ENCODE measurements at regions of chr3 and their contacts with region 1.

Region 1: DNA sequence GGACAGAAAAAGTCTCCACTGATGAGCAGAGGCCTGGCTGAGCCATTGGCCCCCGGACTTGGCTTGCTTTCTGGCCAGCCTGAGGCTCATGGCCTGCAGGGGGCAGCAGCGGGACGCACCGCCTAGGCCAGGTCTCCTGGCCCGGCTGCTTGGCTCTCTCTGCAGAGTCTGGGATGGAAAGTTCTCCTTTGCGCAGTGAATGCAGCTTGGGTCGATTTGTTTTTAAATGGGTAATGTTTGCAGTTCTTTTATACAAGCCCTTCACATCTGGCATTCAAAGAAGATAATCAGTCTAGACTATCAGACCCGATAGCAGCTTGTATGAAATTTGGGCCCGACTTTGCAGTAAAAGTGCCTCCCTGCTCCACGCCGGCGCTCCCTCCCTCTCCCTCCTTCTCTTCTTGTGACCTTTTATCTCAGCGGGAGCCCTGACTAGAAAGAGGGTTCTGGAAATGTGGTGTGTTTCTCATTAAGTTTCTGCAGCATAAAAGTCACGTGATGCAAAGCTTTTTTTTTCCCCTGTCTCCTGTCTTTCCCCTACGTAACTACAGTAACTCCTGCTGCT is 59.9 kb downstream of the ZNF621 start:
- DNase-seq: peak; percentile 78
- ATAC-seq: peak; percentile 86
- H3K4me3 Mint-ChIP-seq: no peak overlapping the region
- H3K27ac Mint-ChIP-seq: no peak overlapping the region
- H3K4me1 Mint-ChIP-seq: peaks cover 5% of the 10 kb centered on the region
- H3K27me3 Mint-ChIP-seq: peaks cover 15% of the 10 kb centered on the region
- CTCF ChIP-seq: peak; percentile 91

Region 2: GRCh38 chr3:39434574-39434973 is 1150.1 kb before region 1 on chr3:
- CTCF ChIA-PET with region 1: no interaction called
- POLR2A ChIA-PET with region 1: no interaction called
- intact Hi-C with region 1: no loop called
- DNase-seq: no peak
- ATAC-seq: peak; percentile 99
- H3K4me3 Mint-ChIP-seq: no peak overlapping the region
- H3K27ac Mint-ChIP-seq: no peak overlapping the region
- H3K4me1 Mint-ChIP-seq: peaks cover 4% of the 10 kb centered on the region
- H3K27me3 Mint-ChIP-seq: peaks cover 9% of the 10 kb centered on the region
- CTCF ChIP-seq: no peak

Region 3: DNA sequence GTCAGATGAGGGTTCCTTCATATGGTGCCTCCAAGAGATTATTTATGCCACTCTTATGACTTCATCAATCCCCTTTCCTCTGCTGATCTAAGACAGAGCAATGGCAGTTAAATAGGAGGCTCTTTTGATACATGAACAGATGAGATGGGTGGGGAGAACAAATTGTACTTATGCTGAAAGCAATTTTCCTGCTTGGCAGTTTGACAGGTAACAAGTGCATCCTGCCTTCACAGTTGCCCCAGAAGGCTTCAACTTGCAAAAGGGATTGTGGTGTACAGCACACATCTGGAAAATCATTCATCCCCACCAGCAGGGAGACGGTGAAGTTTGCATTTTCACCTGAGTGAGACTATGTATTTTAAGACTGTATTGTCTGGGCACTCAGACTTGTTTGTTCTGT is 170.4 kb before region 1 on chr3:
- CTCF ChIA-PET with region 1: no interaction called
- POLR2A ChIA-PET with region 1: no interaction called
- intact Hi-C with region 1: no loop called
- DNase-seq: no peak
- ATAC-seq: no peak
- H3K4me3 Mint-ChIP-seq: no peak overlapping the region
- H3K27ac Mint-ChIP-seq: no peak overlapping the region
- H3K4me1 Mint-ChIP-seq: no peaks in the 10 kb centered on the region
- H3K27me3 Mint-ChIP-seq: peaks cover 15% of the 10 kb centered on the region
- CTCF ChIP-seq: no peak

Region 4: DNA sequence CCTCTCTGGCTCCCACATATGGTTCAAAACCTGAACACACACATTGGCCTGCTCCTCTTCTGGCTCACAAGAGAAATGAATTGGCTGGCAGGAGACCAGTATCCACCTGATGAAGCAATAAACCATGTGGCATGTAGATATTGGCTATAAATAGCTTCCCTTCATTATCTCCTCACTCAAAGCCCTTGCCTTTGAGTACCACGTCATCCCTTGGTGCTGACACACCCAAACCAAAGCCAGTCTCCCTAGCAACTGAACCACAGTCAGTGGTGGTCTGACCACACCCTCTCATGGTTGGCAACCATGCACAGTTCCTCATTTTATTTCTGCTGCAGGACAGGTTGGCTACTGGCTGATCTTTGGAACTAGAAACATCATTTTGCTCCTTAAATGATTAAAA is 38.9 kb after region 1 on chr3:
- CTCF ChIA-PET with region 1: interaction called, 3 read pairs
- POLR2A ChIA-PET with region 1: no interaction called
- intact Hi-C with region 1: loop called (anchors 1 kb)
- DNase-seq: peak; percentile 65
- ATAC-seq: peak; percentile 92
- H3K4me3 Mint-ChIP-seq: no peak overlapping the region
- H3K27ac Mint-ChIP-seq: no peak overlapping the region
- H3K4me1 Mint-ChIP-seq: peaks cover 13% of the 10 kb centered on the region
- H3K27me3 Mint-ChIP-seq: no peaks in the 10 kb centered on the region
- CTCF ChIP-seq: no peak

Region 5: GRCh38 chr3:40770061-40770460 is 185.4 kb after region 1 on chr3:
- CTCF ChIA-PET with region 1: no interaction called
- POLR2A ChIA-PET with region 1: no interaction called
- intact Hi-C with region 1: loop called (anchors 10 kb)
- DNase-seq: no peak
- ATAC-seq: no peak
- H3K4me3 Mint-ChIP-seq: no peak overlapping the region
- H3K27ac Mint-ChIP-seq: no peak overlapping the region
- H3K4me1 Mint-ChIP-seq: peaks cover 3% of the 10 kb centered on the region
- H3K27me3 Mint-ChIP-seq: no peaks in the 10 kb centered on the region
- CTCF ChIP-seq: no peak

Region 6: DNA sequence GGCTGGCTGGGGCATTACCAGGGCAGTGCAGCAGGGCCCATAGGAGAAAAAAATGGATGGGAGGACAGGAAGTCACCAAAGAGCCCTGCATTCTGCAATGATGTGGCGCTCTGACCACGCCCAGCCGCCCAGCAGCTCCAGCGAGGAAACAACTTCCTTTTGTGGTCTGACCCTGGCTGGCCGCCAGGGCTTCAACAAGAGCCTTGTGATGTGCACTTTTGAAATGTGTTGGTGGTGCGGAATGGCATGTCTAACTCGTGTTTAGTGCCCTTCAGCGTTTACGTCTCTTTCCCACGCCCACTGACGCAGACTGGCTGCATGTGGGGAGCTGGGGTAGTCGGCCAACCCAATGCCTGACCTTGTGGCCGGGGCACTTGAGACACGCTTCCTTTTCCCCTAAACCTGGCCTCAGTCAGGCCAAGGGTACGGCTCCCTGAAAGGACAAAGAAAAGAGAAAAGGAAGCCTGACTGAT is 532.7 kb after region 1 on chr3:
- CTCF ChIA-PET with region 1: no interaction called
- POLR2A ChIA-PET with region 1: no interaction called
- intact Hi-C with region 1: loop called (anchors 10 kb)
- DNase-seq: peak; percentile 24
- ATAC-seq: peak; percentile 73
- H3K4me3 Mint-ChIP-seq: peak overlapping the region; percentile 36
- H3K27ac Mint-ChIP-seq: no peak overlapping the region
- H3K4me1 Mint-ChIP-seq: peaks cover 12% of the 10 kb centered on the region
- H3K27me3 Mint-ChIP-seq: peaks cover 14% of the 10 kb centered on the region
- CTCF ChIP-seq: no peak

Region 7: GRCh38 chr3:41330465-41330864 is 745.8 kb after region 1 on chr3:
- CTCF ChIA-PET with region 1: no interaction called
- POLR2A ChIA-PET with region 1: no interaction called
- intact Hi-C with region 1: loop called (anchors 10 kb)
- DNase-seq: no peak
- ATAC-seq: no peak
- H3K4me3 Mint-ChIP-seq: no peak overlapping the region
- H3K27ac Mint-ChIP-seq: no peak overlapping the region
- H3K4me1 Mint-ChIP-seq: no peaks in the 10 kb centered on the region
- H3K27me3 Mint-ChIP-seq: no peaks in the 10 kb centered on the region
- CTCF ChIP-seq: no peak

Region 8: DNA sequence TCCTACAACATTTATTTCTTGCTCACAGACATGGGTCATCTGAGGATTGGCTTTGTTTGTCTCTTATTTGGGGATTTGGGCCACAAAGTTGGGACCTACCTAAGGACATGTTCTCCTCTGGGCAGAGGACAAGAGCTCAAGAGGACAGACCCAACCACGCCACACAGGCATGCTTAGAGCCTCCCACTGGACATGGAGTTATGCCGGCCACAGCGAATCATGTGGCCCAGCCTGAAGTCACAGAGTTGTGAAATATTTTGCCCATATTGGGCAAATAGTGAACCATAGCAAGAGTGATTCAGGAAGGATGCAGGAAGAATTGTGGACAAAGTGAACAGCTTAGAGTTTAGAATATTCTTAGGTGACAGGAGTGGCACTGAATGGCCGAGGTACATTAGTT is 1516.3 kb after region 1 on chr3:
- CTCF ChIA-PET with region 1: interaction called, 4 read pairs
- POLR2A ChIA-PET with region 1: no interaction called
- intact Hi-C with region 1: loop called (anchors 1 kb)
- DNase-seq: no peak
- ATAC-seq: no peak
- H3K4me3 Mint-ChIP-seq: no peak overlapping the region
- H3K27ac Mint-ChIP-seq: peak overlapping the region; percentile 24
- H3K4me1 Mint-ChIP-seq: peaks cover 37% of the 10 kb centered on the region
- H3K27me3 Mint-ChIP-seq: no peaks in the 10 kb centered on the region
- CTCF ChIP-seq: no peak

Measured in activated B cell treated with CpG ODN at 0.5 μM for 24 hours (primary cell).